Activated T-helper 1 cell treated with anti-CD3 and anti-CD28 coated beads, Interleukin-12 subunit alpha, Interleukin-12 subunit beta, Interleukin-2, Interleukin-4 antibody, amounts not matched to agents 30 ng/mL and 10 ng/mL and 1 ng/mL, durations not matched to agents 14 hours and 24 hours and 36 hours (primary cell): ENCODE measurements at regions of chr19 and their contacts with region 1.

Region 1: DNA sequence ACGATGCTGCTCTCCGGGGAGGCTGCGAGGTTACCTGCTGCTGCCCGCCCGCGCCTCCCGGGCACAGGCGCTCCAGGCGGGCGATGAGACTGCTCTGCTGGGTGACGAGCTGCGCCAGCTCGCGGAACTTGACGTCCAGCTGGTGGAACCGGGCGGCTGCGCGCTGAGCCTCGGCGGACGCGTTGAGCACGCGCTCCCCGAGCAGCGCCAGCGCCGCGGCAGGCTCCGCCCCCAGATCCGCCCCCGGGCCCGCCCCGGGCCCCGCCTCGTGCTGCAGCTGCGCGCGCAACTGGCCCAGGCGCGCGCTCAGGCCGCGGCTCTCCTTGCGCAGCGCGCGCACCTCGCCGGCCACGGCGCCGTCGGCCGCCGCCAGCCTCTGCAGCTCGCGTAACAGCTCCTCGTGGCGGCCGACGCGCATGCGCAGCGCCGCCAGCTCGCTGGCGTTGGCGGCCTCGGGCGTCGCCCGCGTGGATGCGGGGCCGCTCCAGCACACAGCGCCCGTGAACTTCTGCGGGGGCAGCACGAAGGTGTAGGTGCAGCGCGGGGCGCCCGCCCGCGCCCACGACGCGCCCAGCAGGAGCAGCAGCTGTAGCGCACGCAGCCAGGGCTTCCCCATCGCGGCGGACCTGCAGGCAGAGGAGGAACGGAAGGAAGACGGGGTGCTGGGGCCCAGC is 6.4 kb downstream of the ANGPTL6 start:
- DNase-seq: peak; percentile 91
- H3K4me3 Mint-ChIP-seq: peak overlapping the region; percentile 49
- H3K27ac Mint-ChIP-seq: peak overlapping the region; percentile 79
- H3K4me1 Mint-ChIP-seq: peaks cover 21% of the 10 kb centered on the region
- H3K27me3 Mint-ChIP-seq: no peaks in the 10 kb centered on the region

Region 2: GRCh38 chr19:10043286-10043927 is 52.7 kb before region 1 on chr19:
- intact Hi-C with region 1: no loop called
- DNase-seq: no peak
- H3K4me3 Mint-ChIP-seq: no peak overlapping the region
- H3K27ac Mint-ChIP-seq: no peak overlapping the region
- H3K4me1 Mint-ChIP-seq: no peaks in the 10 kb centered on the region
- H3K27me3 Mint-ChIP-seq: peaks cover 7% of the 10 kb centered on the region

Region 3: GRCh38 chr19:10085641-10086590 is 10.2 kb before region 1 on chr19 and contains the start of gene SHFL:
- intact Hi-C with region 1: loop called (anchors 1 kb)
- DNase-seq: peak; percentile 88
- H3K4me3 Mint-ChIP-seq: peak within 1 kb of the TSS; percentile 90
- H3K27ac Mint-ChIP-seq: peak within 1 kb of the TSS; percentile 88
- H3K4me1 Mint-ChIP-seq: peaks cover 7% of the 10 kb centered on the region
- H3K27me3 Mint-ChIP-seq: peaks cover 2% of the 10 kb centered on the region
- total RNA-seq, gene SHFL: 64.1 and 70.5 TPM in 2 replicates

Region 4: DNA sequence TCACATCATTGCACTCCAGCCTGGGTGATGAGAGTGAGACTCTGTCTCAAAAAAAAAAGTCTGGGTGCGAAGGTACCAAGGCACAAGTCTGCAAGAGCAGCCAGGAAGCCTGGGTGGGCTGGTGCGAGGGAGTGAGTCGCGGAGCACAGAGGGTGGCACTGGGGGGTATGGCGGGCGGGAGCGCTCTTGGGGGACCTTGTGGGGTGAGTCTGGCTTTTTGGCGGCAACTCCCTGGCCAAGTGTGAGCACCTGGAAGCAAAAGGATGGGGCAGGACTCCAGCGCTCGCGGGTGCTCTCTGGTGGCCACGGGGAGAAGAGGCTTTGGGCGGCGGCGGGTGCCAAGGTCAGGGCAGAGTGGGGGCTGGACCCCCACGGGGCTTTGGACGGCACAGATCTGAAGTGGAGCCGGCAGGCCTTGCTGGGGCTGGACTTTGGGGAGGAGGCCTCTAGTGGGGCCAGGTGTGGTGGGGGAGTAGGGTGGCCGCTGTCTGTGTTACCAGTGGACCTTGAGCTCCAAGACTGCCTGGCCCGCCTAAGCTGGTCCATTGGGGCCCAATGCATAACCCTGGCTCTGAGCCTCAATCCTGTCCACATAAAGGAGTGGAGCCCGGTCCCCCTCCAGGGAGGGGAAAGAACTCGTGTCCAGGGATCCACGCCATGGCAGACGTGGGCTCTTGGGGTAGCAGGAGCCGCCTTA is 17.0 kb after region 1 on chr19:
- intact Hi-C with region 1: loop called (anchors 2 kb)
- DNase-seq: peak; percentile 41
- H3K4me3 Mint-ChIP-seq: peak overlapping the region; percentile 70
- H3K27ac Mint-ChIP-seq: peak overlapping the region; percentile 90
- H3K4me1 Mint-ChIP-seq: peaks cover 28% of the 10 kb centered on the region
- H3K27me3 Mint-ChIP-seq: no peaks in the 10 kb centered on the region

Region 5: DNA sequence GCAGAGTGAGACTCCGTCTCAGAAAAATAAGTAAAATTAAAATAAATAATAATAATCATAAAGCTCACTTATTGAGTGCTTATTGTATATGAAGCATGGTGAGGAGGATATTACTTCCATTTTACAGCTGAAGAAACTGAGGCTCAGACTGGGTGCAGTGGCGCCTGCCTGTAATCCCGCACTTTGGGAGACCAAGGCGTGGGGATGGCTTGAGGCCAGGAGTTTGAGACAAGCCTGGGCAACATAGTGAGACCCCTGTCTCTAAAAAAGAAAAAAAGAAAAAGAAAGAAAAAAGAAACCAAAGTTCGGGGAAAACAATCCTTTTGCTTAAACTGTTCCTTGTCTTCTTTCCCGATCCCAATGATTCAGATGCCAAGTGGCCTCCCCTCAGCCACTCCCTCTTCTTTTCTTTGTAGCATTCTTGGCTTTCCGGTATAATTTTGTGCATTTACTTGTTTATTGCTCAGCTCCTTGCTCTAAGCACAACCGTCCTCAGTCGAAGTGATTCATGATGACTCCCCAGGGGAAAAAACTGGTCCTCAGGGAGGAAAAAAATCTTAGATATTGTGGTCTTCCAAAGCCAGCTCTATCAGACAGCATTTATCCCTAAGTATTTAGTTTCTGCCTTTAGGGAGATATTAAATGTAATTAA is 24.6 kb after region 1 on chr19:
- intact Hi-C with region 1: loop called (anchors 1 kb)
- DNase-seq: no peak
- H3K4me3 Mint-ChIP-seq: no peak overlapping the region
- H3K27ac Mint-ChIP-seq: no peak overlapping the region
- H3K4me1 Mint-ChIP-seq: peaks cover 11% of the 10 kb centered on the region
- H3K27me3 Mint-ChIP-seq: no peaks in the 10 kb centered on the region

Region 6: DNA sequence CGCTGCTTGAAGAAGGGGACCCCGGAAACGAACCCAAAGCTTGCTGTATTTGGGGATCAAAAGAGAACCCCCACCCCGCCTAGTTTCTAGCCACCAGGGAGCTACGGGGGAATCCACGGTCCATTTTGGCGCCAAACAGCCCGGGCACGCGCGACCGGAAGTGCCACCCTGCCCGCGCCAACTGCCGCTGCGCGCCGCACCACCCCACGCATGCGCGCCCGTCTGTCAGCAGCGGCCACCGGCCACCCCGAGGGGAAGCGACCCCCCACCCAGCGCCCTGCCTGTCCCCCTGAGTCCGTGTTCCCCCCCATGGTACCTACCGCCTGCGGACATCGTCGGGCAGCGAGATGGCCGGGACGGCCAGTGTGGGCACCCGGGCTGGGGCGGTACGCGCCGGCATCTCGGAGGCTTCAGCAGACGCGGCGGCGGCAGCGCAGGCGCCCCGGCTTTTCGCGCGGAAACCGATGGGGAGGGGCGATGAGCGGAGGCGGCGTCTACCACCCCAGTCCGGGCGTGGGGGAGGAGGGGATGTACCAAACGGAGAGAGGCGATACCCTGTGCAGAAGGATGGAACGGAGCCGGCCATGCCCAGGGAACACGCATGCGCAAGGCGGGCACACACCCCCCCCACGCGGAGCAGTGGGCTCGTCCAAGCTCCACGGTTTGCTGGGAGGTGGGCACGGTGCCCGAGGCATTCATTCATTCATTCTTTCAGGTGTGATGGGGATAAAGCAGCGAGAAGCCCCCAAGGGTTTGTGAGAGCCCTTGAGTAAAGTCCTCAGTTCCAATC is 98.6 kb after region 1 on chr19 and contains the start of gene DNMT1:
- intact Hi-C with region 1: loop called (anchors 2 kb)
- DNase-seq: peak; percentile 97
- H3K4me3 Mint-ChIP-seq: peak within 1 kb of the TSS; percentile 97
- H3K27ac Mint-ChIP-seq: peak within 1 kb of the TSS; percentile 97
- H3K4me1 Mint-ChIP-seq: peaks cover 16% of the 10 kb centered on the region
- H3K27me3 Mint-ChIP-seq: no peaks in the 10 kb centered on the region
- total RNA-seq, gene DNMT1: 411 and 425 TPM in 2 replicates